GM23248 (cell line): ENCODE measurements at regions of chr19 and their contacts with region 1.

Region 1: GRCh38 chr19:11293433-11294389 is 2.2 kb upstream of the TSPAN16 start:
- DNase-seq: peak; percentile 94
- H3K4me3 ChIP-seq: peak overlapping the region; percentile 57
- H3K27ac ChIP-seq: peak overlapping the region; percentile 54
- H3K4me1 ChIP-seq: peaks cover 6% of the 10 kb centered on the region
- H3K27me3 ChIP-seq: no peaks in the 10 kb centered on the region

Region 2: GRCh38 chr19:11191273-11191755 is 102.4 kb before region 1 on chr19:
- in situ Hi-C with region 1: no loop called
- DNase-seq: peak; percentile 74
- H3K4me3 ChIP-seq: no peak overlapping the region
- H3K27ac ChIP-seq: peak overlapping the region; percentile 14; the same call in 1 of the 2 replicates
- H3K4me1 ChIP-seq: peaks cover 18% of the 10 kb centered on the region; the same call in 1 of the 2 replicates
- H3K27me3 ChIP-seq: no peaks in the 10 kb centered on the region

Region 3: GRCh38 chr19:11453468-11454341 is 160.0 kb after region 1 on chr19:
- in situ Hi-C with region 1: loop called (anchors 25 kb)
- DNase-seq: no peak
- H3K4me3 ChIP-seq: no peak overlapping the region
- H3K27ac ChIP-seq: no peak overlapping the region
- H3K4me1 ChIP-seq: no peaks in the 10 kb centered on the region
- H3K27me3 ChIP-seq: no peaks in the 10 kb centered on the region